Transverse colon (tissue), 4 donors: ENCODE measurements at regions of chr19 and their contacts with region 1.

Region 1: GRCh38 chr19:19531951-19532805 is 3.5 kb downstream of the YJEFN3 start:
- DNase-seq: peak; percentile 86
- H3K4me3 ChIP-seq: no peak overlapping the region
- H3K27ac ChIP-seq: no peak overlapping the region
- H3K4me1 ChIP-seq: peaks cover 0 to 10% (median 7%) of the 10 kb centered on the region in 4 donors
- H3K27me3 ChIP-seq: peaks cover 7% of the 10 kb centered on the region
- CTCF ChIP-seq: peak; percentile 95 to 98 (median 98)
- EP300 ChIP-seq: no peak
- POLR2A ChIP-seq: no peak

Region 2: DNA sequence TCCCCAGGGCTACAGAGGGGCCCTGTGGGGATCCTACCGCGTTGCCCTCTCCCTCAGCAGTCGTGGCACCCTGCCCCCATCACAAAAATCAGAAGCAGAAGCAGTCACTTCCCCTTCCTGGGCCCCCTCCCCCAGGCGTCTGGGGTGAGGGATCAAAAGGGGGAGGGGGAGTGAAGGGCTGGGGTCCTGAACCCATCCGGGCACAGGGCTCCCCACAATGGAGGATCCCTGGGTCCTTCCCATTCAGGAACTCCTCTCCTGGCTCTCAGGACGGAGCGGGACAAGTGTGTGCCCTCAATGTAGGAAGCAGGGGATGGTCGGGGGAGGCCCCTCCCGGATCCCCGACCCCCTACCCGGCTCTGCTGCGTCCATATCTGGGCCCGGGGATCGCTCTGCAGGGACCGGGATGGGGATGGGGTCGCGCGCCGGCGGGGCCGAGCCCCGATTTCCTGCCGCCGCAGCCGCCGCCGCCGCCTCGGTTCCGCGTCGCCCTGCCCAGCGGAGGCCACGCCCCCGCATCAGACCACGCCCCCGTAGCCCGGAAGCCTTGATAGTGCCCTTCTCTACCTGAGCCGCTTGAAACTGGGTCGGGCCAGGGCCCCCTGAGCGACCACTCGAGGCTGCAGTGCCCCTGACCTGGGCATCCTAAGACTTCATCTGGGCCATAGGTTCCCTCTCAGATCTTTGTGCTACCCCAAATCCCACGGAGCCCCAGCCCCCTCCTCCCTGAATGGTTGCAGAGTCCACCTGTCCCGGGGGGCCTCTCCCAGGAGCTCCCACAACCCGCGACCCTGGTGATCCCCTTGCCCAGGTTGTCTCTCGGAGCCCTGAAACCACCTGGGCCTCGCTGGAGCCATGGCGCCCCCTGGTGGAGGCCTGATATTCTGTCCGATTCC is 111.2 kb after region 1 on chr19 and contains the start of gene GMIP:
- in situ Hi-C with region 1: loop called (anchors 5 to 25 kb)
- intact Hi-C with region 1: loop called (anchors 2 kb)
- DNase-seq: peak; percentile 91
- H3K4me3 ChIP-seq: peak within 1 kb of the TSS; percentile 38 to 86 (median 81)
- H3K27ac ChIP-seq: peak within 1 kb of the TSS; percentile 81 to 88 (median 84)
- H3K4me1 ChIP-seq: peaks cover 0 to 10% (median 5%) of the 10 kb centered on the region in 4 donors
- H3K27me3 ChIP-seq: no peaks in the 10 kb centered on the region
- CTCF ChIP-seq: peak; percentile 90 to 96 (median 93)
- EP300 ChIP-seq: no peak
- POLR2A ChIP-seq: peak; percentile 69
- total RNA-seq, gene GMIP: 17.3 to 84.9 (median 27.2) TPM

Region 3: GRCh38 chr19:19956434-19957075 is 424.4 kb after region 1 on chr19:
- in situ Hi-C with region 1: loop called (anchors 10 to 25 kb)
- intact Hi-C with region 1: loop called (anchors 10 kb)
- DNase-seq: no peak
- H3K4me3 ChIP-seq: no peak overlapping the region
- H3K27ac ChIP-seq: no peak overlapping the region
- H3K4me1 ChIP-seq: peaks cover 0 to 3% (median 1%) of the 10 kb centered on the region in 4 donors
- H3K27me3 ChIP-seq: no peaks in the 10 kb centered on the region
- CTCF ChIP-seq: no peak
- EP300 ChIP-seq: no peak
- POLR2A ChIP-seq: no peak

Region 4: GRCh38 chr19:19966862-19967261 is 434.7 kb after region 1 on chr19:
- in situ Hi-C with region 1: loop called (anchors 10 to 25 kb)
- intact Hi-C with region 1: no loop called
- DNase-seq: no peak
- H3K4me3 ChIP-seq: no peak overlapping the region
- H3K27ac ChIP-seq: no peak overlapping the region
- H3K4me1 ChIP-seq: no peaks in the 10 kb centered on the region
- H3K27me3 ChIP-seq: no peaks in the 10 kb centered on the region
- CTCF ChIP-seq: no peak
- EP300 ChIP-seq: no peak
- POLR2A ChIP-seq: no peak

Region 5: DNA sequence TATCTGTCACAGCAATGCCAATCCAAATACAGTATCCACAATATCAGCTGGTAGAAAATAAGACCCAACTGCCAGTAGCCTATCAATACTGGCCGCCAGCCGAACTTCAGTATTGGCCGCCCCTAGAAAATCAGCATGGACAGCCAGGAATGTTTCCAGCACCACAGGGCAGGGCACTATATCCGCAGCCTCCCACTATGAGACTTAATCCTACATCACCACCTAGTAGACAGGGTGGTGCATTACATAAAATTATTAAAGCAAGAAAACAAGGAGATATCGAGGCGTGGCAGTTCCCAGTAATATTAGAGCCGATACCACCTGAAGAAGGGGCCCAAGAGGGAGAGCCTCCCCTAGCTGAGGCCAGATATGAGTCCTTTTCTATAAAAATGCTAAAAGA is 746.2 kb after region 1 on chr19:
- in situ Hi-C with region 1: loop called in 1 of 4 experiments (anchors 25 kb)
- intact Hi-C with region 1: no loop called
- DNase-seq: peak; percentile 12
- H3K4me3 ChIP-seq: no peak overlapping the region
- H3K27ac ChIP-seq: no peak overlapping the region
- H3K4me1 ChIP-seq: peaks cover 0 to 3% (median 0%) of the 10 kb centered on the region in 4 donors
- H3K27me3 ChIP-seq: no peaks in the 10 kb centered on the region
- CTCF ChIP-seq: peak in 3 of 5 experiments; percentile 33 to 57 (median 48)
- EP300 ChIP-seq: no peak
- POLR2A ChIP-seq: no peak

Region 6: DNA sequence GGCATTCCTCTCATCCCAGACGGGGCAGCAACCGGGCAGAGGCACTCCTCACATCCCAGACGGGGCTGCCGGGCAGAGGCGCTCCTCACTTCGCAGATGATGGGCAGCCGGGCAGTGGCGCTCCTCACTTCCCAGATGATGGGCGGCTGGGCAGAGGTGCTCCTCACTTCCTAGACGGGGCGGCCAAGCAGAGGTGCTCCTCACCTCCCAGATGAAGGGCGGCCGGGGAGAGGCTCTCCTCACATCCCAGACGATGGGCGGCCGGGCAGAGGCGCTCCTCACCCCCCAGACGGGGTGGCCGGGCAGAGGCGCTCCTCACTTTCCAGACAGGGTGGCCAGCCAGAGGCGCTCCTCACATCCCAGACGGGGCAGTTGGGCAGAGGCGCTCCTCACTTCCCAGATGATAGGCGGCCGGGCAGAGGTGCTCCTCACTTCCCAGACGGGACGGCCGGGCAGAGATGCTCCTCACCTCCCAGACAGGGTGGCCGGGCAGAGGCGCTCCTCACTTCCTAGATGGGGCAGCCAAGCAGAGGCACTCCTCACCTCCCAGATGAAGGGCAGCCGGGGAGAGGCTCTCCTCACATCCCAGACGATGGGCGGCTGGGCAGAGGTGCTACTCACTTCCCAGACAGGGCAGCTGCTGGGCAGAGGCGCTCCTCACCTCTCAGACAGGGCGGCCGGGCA is 1728.1 kb after region 1 on chr19:
- in situ Hi-C with region 1: no loop called
- intact Hi-C with region 1: loop called (anchors 5 kb)
- DNase-seq: no peak
- H3K4me3 ChIP-seq: no peak overlapping the region
- H3K27ac ChIP-seq: no peak overlapping the region
- H3K4me1 ChIP-seq: no peaks in the 10 kb centered on the region
- H3K27me3 ChIP-seq: no peaks in the 10 kb centered on the region
- CTCF ChIP-seq: no peak
- EP300 ChIP-seq: no peak
- POLR2A ChIP-seq: no peak